ENCODE measurements at regions of chr6 and their contacts with region 1.

Region 1: DNA sequence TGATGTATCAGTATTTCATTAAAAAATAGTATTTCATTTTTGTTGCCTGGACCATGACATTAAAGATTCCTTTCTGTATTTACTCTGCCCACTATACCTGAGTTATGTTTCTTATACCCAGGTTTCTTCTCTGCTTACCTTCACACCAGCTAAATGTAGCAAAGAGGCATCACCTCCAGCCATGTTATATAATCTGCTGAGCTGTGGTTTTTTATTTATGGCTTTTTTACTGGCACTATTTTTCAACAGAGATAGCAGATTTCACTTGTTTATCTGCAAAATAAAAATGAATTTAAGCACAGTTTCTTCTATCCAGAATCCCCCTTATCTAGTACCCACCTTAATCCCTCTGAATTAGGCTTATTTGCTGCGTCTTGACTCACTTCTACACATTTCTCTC is 979.0 kb upstream of the MAN1A1 start:
- DNase-seq: no peak
- H3K4me3 ChIP-seq: no peak overlapping the region
- H3K4me3 Mint-ChIP-seq: no peak overlapping the region
- H3K27ac Mint-ChIP-seq: no peak overlapping the region
- H3K4me1 ChIP-seq: peaks cover 21% of the 10 kb centered on the region; the same call in 1 of the 2 replicates
- H3K4me1 Mint-ChIP-seq: no peaks in the 10 kb centered on the region
- H3K27me3 ChIP-seq: no peaks in the 10 kb centered on the region
- H3K27me3 Mint-ChIP-seq: no peaks in the 10 kb centered on the region
- CTCF ChIP-seq: no peak

Region 2: GRCh38 chr6:120211955-120212792 is 116.3 kb before region 1 on chr6:
- CTCF ChIA-PET with region 1: no interaction called
- POLR2A ChIA-PET with region 1: no interaction called
- intact Hi-C with region 1: loop called (anchors 2 kb)
- DNase-seq: peak; percentile 67 to 70
- H3K4me3 ChIP-seq: no peak overlapping the region
- H3K4me3 Mint-ChIP-seq: peak overlapping the region; percentile 67
- H3K27ac Mint-ChIP-seq: peak overlapping the region; percentile 67
- H3K4me1 ChIP-seq: peaks cover 36% of the 10 kb centered on the region
- H3K4me1 Mint-ChIP-seq: peaks cover 46% of the 10 kb centered on the region
- H3K27me3 ChIP-seq: no peaks in the 10 kb centered on the region
- H3K27me3 Mint-ChIP-seq: no peaks in the 10 kb centered on the region
- CTCF ChIP-seq: no peak

Region 3: DNA sequence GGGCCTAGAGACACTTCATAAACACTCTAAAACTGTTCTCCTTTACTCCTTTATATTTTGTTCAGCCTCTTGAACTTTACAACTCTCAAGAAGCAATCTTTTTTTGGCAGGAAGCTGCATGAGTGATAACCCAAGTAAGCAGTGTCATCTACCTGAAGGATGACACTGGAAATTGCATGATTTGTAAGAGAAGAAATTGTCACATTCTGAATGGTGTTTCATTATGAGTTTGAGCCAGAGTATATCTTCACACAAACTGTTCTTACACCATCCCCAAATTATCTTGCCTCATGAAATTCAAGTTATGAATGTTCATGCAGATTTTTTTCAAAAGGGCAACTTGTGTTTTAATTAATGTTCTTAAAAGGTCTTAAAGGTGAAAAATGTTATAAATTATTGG is 206.4 kb after region 1 on chr6:
- CTCF ChIA-PET with region 1: no interaction called
- POLR2A ChIA-PET with region 1: no interaction called
- intact Hi-C with region 1: no loop called
- DNase-seq: no peak
- H3K4me3 ChIP-seq: no peak overlapping the region
- H3K4me3 Mint-ChIP-seq: no peak overlapping the region
- H3K27ac Mint-ChIP-seq: no peak overlapping the region
- H3K4me1 ChIP-seq: no peaks in the 10 kb centered on the region
- H3K4me1 Mint-ChIP-seq: no peaks in the 10 kb centered on the region
- H3K27me3 ChIP-seq: no peaks in the 10 kb centered on the region
- H3K27me3 Mint-ChIP-seq: no peaks in the 10 kb centered on the region
- CTCF ChIP-seq: no peak

Measured in Caco-2 (cell line).